H1 (cell line): ENCODE measurements at regions of chr9 and their contacts with region 1.

Region 1: GRCh38 chr9:71806901-71807307 is 38.6 kb upstream of the CEMIP2 start:
- DNase-seq: peak; percentile 27 to 55
- H3K4me3 ChIP-seq: no peak overlapping the region
- H3K27ac ChIP-seq: no peak overlapping the region
- H3K4me1 ChIP-seq: no peaks in the 10 kb centered on the region
- H3K27me3 ChIP-seq: no peaks in the 10 kb centered on the region
- CTCF ChIP-seq: peak; percentile 63 to 92 (median 90)
- EP300 ChIP-seq: no peak
- POLR2A ChIP-seq: no peak
- RAD21 ChIP-seq: peak; percentile 97 to 98

Region 2: GRCh38 chr9:71795097-71795813 is 11.6 kb before region 1 on chr9:
- CTCF ChIA-PET with region 1: interaction called, 26 read pairs
- POLR2A ChIA-PET with region 1: no interaction called
- DNase-seq: no peak
- H3K4me3 ChIP-seq: no peak overlapping the region
- H3K27ac ChIP-seq: no peak overlapping the region
- H3K4me1 ChIP-seq: no peaks in the 10 kb centered on the region
- H3K27me3 ChIP-seq: no peaks in the 10 kb centered on the region
- CTCF ChIP-seq: no peak
- EP300 ChIP-seq: no peak
- POLR2A ChIP-seq: no peak
- RAD21 ChIP-seq: no peak

Region 3: GRCh38 chr9:71830929-71831328 is 24.0 kb after region 1 on chr9:
- CTCF ChIA-PET with region 1: no interaction called
- POLR2A ChIA-PET with region 1: no interaction called
- DNase-seq: no peak
- H3K4me3 ChIP-seq: no peak overlapping the region
- H3K27ac ChIP-seq: no peak overlapping the region
- H3K4me1 ChIP-seq: no peaks in the 10 kb centered on the region
- H3K27me3 ChIP-seq: no peaks in the 10 kb centered on the region
- CTCF ChIP-seq: no peak
- EP300 ChIP-seq: no peak
- POLR2A ChIP-seq: no peak
- RAD21 ChIP-seq: no peak

Region 4: GRCh38 chr9:71891557-71892189 is 84.8 kb after region 1 on chr9:
- CTCF ChIA-PET with region 1: no interaction called
- POLR2A ChIA-PET with region 1: no interaction called
- DNase-seq: no peak
- H3K4me3 ChIP-seq: no peak overlapping the region
- H3K27ac ChIP-seq: no peak overlapping the region
- H3K4me1 ChIP-seq: peaks cover 0 to 4% (median 0%) of the 10 kb centered on the region in 4 experiments; a peak in 1 of 7 replicates
- H3K27me3 ChIP-seq: no peaks in the 10 kb centered on the region
- CTCF ChIP-seq: no peak
- EP300 ChIP-seq: no peak
- POLR2A ChIP-seq: no peak
- RAD21 ChIP-seq: no peak